Activated CD4-positive, alpha-beta T cell treated with anti-CD3 and anti-CD28 coated beads, Interleukin-2, amount 10 ng/mL, durations not matched to agents 7 days and 5 days (primary cell): ENCODE measurements at regions of chr22 and their contacts with region 1.

Region 1: DNA sequence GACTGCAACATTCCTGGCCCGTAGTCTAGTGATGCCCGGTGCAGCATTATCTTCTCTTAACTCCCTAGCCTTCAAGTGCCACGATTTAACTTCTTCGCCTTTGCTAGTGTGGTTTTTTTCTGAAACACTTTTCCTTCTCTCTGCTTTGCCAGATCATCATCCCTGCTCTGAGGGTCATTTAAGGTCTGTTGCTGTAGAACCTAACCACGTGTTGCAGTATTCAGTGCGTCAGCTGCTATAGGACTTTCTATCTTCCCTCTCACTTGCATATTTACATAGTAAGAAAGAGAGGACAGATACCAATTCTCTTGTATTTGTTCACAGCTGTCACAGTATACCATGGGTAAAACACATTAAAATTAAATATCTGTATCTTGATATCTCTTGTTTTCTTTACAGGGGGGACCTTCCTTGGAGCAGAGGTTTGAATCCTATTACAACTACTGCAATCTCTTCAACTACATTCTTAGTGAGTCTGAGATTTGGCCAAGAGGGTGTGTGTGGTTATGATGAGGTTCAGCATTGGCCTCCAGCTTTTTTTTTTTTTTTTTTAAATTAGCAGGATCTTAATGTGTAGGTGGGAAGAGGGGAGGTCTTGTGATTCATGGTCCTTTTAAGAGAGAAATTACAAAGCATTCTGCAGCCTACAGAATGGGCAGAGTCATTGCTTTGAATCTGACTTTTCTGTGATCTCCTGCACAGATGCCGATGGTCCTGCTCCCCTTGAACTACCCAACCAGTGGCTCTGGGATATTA is 13.5 kb downstream of the EIF3L start:
- DNase-seq: no peak
- H3K4me3 Mint-ChIP-seq: no peak overlapping the region
- H3K27ac Mint-ChIP-seq: no peak overlapping the region
- H3K4me1 Mint-ChIP-seq: peaks cover 6% of the 10 kb centered on the region
- H3K27me3 Mint-ChIP-seq: no peaks in the 10 kb centered on the region

Region 2: DNA sequence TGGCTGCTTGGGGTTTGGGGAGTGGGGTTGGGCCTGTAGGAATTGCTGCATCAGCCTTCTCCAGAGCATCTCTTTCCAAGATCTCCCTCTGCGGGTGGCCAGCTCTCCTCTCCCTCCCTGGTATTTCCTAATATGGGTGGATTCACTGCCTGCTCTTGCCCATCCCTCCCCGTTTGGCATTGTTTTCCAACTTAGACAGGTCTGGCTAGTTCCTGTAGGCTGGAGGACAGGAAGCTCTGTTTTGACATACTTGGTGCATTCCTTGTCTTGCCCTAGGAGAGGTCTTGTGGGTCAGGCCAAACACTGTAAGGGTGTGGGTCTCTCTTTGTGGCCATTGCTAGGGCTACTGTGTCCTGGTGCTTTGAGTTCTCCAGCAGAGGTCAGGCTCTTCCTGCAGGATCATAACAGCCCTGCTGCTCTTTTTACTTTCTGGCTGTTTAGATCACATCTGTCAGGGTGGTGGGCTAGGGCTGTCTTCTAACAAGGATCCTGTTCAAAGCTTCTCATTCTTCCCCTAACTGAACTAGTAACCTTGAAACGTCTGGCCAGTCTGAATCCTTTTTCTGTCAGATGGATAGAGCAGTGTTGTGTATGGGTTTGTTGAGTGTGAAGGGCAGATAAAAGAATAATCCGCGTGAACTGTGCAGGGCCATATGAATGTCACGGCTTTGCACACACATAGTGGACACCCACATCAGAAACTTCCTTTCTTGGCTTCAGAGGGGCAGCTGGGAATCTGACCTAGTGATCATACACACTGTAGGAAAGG is 25.0 kb after region 1 on chr22:
- CTCF ChIA-PET with region 1: interaction called, 11 read pairs
- POLR2A ChIA-PET with region 1: no interaction called
- DNase-seq: no peak
- H3K4me3 Mint-ChIP-seq: no peak overlapping the region
- H3K27ac Mint-ChIP-seq: peak overlapping the region; percentile 50
- H3K4me1 Mint-ChIP-seq: peaks cover 9% of the 10 kb centered on the region
- H3K27me3 Mint-ChIP-seq: no peaks in the 10 kb centered on the region

Region 3: DNA sequence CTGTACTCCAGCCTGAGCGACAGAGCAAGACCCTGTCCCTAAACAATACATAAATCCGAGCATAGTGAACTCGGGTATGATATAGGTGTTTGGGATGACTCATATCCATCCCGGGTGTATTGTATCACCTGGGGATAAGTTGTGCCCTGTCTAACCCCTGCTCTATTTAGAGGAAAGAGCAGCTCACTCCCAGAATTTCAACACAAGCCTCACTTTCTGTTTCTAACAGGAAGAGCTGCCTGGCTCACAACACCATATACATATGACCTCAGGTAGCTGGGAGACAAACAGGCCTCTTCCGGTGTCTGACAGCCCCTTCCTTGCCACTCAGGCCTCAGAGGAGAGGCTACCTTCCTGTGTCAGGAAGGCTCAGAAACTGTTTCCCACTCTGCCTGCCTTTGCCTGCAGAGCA is 33.4 kb after region 1 on chr22:
- CTCF ChIA-PET with region 1: interaction called, 8 read pairs
- POLR2A ChIA-PET with region 1: interaction called, 10 read pairs
- DNase-seq: peak; percentile 77
- H3K4me3 Mint-ChIP-seq: peak overlapping the region; percentile 58
- H3K27ac Mint-ChIP-seq: peak overlapping the region; percentile 97
- H3K4me1 Mint-ChIP-seq: peaks cover 41% of the 10 kb centered on the region
- H3K27me3 Mint-ChIP-seq: no peaks in the 10 kb centered on the region